PC-3 (cell line): ENCODE measurements at regions of chr2 and their contacts with region 1.

Region 1: GRCh38 chr2:30666307-30666874 is 140.9 kb downstream of the CAPN13 start:
- DNase-seq: peak; percentile 98
- ATAC-seq: peak; percentile 76
- H3K4me3 ChIP-seq: 0 out of 2 replicates have a peak overlapping the region, but pooled peaks have one; percentile 12
- H3K27ac ChIP-seq: peak overlapping the region; percentile 98
- H3K4me1 ChIP-seq: peaks cover 49% of the 10 kb centered on the region
- H3K27me3 ChIP-seq: no peaks in the 10 kb centered on the region
- CTCF ChIP-seq: no peak

Region 2: DNA sequence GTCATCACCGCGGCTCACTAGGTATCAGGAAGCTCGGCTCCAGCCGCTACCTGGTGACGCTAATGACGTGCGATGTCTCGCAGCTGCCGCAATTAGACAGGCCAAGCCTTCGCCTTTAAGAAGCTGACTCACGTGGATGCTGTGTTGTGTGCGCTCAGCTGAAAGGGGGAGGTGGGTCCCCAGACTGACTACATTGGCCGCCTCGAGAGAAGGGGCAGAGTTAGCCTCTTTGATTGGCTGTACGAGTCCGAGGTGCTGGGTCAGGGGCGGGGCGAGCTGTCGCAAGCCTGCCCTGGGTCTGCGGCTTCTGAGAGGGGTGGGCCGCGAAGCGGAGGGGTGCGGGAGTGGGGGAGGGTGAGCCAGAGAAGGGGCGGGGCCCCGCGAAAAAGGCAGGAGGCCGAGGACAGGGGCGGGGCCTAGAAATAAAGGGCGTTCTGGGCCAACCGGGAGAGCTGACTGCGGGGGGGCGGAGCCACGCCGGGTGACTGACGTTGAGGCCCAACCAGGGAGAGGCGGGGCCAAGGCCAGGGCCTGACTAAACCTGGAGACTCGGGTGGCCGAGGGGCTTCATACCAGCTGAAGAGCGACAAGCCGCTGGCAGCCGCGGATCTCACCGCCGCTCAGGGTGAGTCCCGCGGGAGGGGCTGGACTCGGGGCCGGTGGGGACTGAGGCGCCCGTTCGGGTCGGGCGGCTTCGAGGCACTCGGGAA is 519.8 kb before region 1 on chr2 and contains the start of gene YPEL5:
- CTCF ChIA-PET with region 1: no interaction called
- POLR2A ChIA-PET with region 1: interaction called, 14 read pairs
- intact Hi-C with region 1: no loop called
- DNase-seq: peak; percentile 96
- ATAC-seq: peak; percentile 94
- H3K4me3 ChIP-seq: peak within 1 kb of the TSS; percentile 93
- H3K27ac ChIP-seq: no peak within 1 kb of the TSS
- H3K4me1 ChIP-seq: peaks cover 37% of the 10 kb centered on the region
- H3K27me3 ChIP-seq: no peaks in the 10 kb centered on the region
- CTCF ChIP-seq: no peak
- total RNA-seq, gene YPEL5: 29.9 TPM in 2 replicates

Region 3: DNA sequence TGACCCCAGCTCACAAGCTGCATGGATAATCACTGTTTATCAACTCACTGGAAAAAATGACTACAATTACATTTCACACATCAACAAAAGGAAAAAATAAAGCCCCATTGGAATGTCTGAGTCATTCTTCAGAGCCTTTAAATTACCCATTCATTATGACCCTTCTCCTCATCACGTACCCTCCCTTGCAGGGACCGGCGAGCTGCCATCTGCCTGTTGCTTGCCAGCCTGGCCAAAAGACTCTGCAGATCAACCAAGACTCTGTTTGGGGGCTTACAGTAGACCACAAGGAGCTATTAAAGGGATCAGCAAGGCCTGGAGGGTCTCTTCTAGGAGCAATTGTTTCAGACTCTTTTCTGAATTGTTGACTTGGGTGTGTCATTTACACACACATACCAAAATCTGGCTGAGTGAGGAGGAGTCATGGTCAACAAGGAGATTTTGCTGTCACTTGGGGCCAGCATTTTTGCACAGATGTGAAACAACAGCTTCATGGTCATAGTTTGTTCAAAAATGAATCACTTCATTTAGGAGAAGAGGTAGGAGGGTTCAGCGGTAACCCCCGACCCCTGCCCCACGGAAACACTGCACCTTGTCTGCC is 393.0 kb before region 1 on chr2:
- CTCF ChIA-PET with region 1: interaction called, 4 read pairs
- POLR2A ChIA-PET with region 1: no interaction called
- intact Hi-C with region 1: loop called (anchors 10 kb)
- DNase-seq: peak; percentile 79
- ATAC-seq: peak; percentile 40
- H3K4me3 ChIP-seq: peak overlapping the region; percentile 17; the same call in 1 of the 2 replicates
- H3K27ac ChIP-seq: peak overlapping the region; percentile 73
- H3K4me1 ChIP-seq: peaks cover 26% of the 10 kb centered on the region
- H3K27me3 ChIP-seq: no peaks in the 10 kb centered on the region
- CTCF ChIP-seq: no peak

Region 4: GRCh38 chr2:30511122-30512083 is 155.0 kb before region 1 on chr2:
- CTCF ChIA-PET with region 1: no interaction called
- POLR2A ChIA-PET with region 1: no interaction called
- intact Hi-C with region 1: loop called (anchors 10 kb)
- DNase-seq: peak; percentile 51
- ATAC-seq: peak; percentile 75
- H3K4me3 ChIP-seq: no peak overlapping the region; the same call in 1 of the 2 replicates
- H3K27ac ChIP-seq: no peak overlapping the region
- H3K4me1 ChIP-seq: peaks cover 43% of the 10 kb centered on the region
- H3K27me3 ChIP-seq: no peaks in the 10 kb centered on the region
- CTCF ChIP-seq: no peak

Region 5: DNA sequence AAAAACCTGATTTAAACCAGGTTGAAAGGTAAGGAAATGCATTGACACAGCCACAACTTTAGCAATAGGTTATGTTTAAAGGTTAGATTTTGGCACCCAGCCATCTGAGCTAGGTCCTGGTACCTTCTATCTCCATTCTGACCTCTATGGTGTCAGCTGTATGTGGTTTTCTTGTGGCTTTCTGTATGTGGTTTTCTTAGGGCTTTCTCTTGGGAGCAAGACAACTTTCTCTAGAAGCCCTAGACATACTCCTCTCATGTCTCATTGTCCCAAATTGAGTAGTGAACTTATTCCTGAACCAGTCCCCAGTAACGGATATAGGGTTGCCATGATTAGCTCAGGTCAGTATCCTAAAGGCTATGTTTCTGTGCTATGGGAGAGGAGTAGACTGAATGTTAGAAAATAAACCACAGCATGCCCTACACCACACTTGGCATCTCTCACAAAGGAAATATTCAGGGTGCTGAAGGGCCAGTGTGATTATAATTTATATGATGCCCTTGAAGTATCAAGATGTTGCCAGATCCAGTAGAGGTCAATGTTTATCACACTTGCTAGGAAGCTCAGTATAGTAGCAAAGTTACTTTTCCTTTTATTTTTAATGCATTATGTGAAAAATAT is 35.2 kb before region 1 on chr2:
- CTCF ChIA-PET with region 1: no interaction called
- POLR2A ChIA-PET with region 1: no interaction called
- intact Hi-C with region 1: loop called (anchors 2 kb)
- DNase-seq: no peak
- ATAC-seq: no peak
- H3K4me3 ChIP-seq: no peak overlapping the region
- H3K27ac ChIP-seq: no peak overlapping the region
- H3K4me1 ChIP-seq: no peaks in the 10 kb centered on the region
- H3K27me3 ChIP-seq: no peaks in the 10 kb centered on the region
- CTCF ChIP-seq: no peak